Activated CD4-positive, alpha-beta T cell treated with anti-CD3 and anti-CD28 coated beads for 36 hours (primary cell): ENCODE measurements at regions of chr10 and their contacts with region 1.

Region 1: GRCh38 chr10:2978111-2978510 is 89.2 kb upstream of the PFKP start:
- DNase-seq: no peak
- ATAC-seq: no peak
- H3K4me3 Mint-ChIP-seq: no peak overlapping the region
- H3K27ac Mint-ChIP-seq: no peak overlapping the region
- H3K4me1 Mint-ChIP-seq: peaks cover 2% of the 10 kb centered on the region
- H3K27me3 Mint-ChIP-seq: peaks cover 5% of the 10 kb centered on the region

Region 2: GRCh38 chr10:2244471-2244870 is 733.6 kb before region 1 on chr10:
- CTCF ChIA-PET with region 1: no interaction called
- POLR2A ChIA-PET with region 1: no interaction called
- intact Hi-C with region 1: no loop called
- DNase-seq: no peak
- ATAC-seq: no peak
- H3K4me3 Mint-ChIP-seq: no peak overlapping the region
- H3K27ac Mint-ChIP-seq: no peak overlapping the region
- H3K4me1 Mint-ChIP-seq: no peaks in the 10 kb centered on the region
- H3K27me3 Mint-ChIP-seq: no peaks in the 10 kb centered on the region

Region 3: GRCh38 chr10:2839081-2839725 is 138.9 kb before region 1 on chr10:
- CTCF ChIA-PET with region 1: no interaction called
- POLR2A ChIA-PET with region 1: no interaction called
- intact Hi-C with region 1: loop called in 1 of 2 experiments (anchors 1 kb)
- DNase-seq: peak; percentile 66
- ATAC-seq: no peak
- H3K4me3 Mint-ChIP-seq: no peak overlapping the region
- H3K27ac Mint-ChIP-seq: no peak overlapping the region
- H3K4me1 Mint-ChIP-seq: no peaks in the 10 kb centered on the region
- H3K27me3 Mint-ChIP-seq: peaks cover 14% of the 10 kb centered on the region

Region 4: DNA sequence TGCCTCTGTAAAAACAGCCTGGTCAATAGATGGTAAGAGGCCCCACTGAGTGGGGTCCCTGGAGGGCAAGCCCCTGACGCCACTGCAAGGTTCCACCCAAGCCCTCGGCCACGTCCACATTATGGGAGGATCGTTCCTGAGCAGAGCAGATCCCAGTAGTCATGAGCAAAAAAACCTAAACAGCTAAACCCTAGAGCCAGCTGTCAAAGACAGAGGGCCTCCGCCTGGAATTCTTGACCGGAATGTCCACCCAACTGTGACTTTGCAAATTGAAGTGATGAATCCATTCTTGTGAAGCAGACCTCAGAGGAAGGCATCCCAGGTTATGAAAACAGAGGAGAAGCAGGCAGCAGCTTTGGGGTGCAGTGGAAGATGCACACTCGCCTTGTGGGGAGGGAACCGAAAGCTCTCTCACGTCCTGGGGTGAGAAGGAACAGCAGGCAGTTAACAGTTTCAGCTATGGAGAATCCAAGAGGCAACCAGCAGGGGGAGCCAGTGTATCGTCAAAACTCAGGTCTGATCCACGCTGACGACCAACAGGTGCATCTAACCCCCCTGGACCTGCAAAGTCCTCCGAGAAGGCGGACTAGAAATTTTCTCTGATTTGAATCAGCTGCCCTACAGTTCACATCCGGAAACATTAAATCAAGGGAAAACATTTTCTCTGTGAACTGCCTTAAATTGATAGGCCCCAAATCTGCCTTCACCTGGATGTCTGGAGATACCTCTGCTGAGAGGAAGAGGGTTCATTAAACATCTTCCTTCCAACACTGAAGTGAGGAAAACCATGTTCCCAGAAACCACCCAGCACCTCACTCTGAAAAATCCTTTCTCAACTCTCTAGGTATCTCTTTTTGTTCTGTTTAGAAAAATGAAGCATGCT is 49.9 kb before region 1 on chr10:
- CTCF ChIA-PET with region 1: interaction called, 12 read pairs
- POLR2A ChIA-PET with region 1: no interaction called
- intact Hi-C with region 1: loop called (anchors 1 kb)
- DNase-seq: peak; percentile 88
- ATAC-seq: peak; percentile 81
- H3K4me3 Mint-ChIP-seq: no peak overlapping the region
- H3K27ac Mint-ChIP-seq: no peak overlapping the region
- H3K4me1 Mint-ChIP-seq: peaks cover 5% of the 10 kb centered on the region
- H3K27me3 Mint-ChIP-seq: peaks cover 24% of the 10 kb centered on the region

Region 5: GRCh38 chr10:2938869-2939268 is 39.2 kb before region 1 on chr10:
- CTCF ChIA-PET with region 1: interaction called, 4 read pairs
- POLR2A ChIA-PET with region 1: no interaction called
- intact Hi-C with region 1: loop called in 1 of 2 experiments (anchors 2 kb)
- DNase-seq: no peak
- ATAC-seq: no peak
- H3K4me3 Mint-ChIP-seq: no peak overlapping the region
- H3K27ac Mint-ChIP-seq: no peak overlapping the region
- H3K4me1 Mint-ChIP-seq: no peaks in the 10 kb centered on the region
- H3K27me3 Mint-ChIP-seq: peaks cover 37% of the 10 kb centered on the region

Region 6: DNA sequence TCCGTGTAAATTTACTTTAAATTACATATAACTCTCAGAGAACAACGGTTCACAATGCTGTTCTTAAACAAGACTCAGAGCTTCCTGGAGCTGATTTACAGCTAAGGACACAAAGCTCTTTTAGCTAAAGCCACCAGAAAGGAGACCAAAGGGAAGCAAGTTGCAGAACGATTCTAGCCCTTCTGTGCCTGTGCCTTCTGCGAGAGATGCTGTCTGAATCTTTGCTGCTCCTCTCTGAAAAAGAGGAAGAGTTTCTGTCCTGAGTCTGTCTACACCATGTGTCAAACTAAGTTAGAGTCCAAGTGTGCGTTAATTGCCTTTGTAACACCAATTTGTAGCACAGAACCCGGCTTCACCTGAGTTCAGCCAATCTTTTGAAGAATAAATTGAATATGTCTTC is 47.2 kb after region 1 on chr10:
- CTCF ChIA-PET with region 1: no interaction called
- POLR2A ChIA-PET with region 1: no interaction called
- intact Hi-C with region 1: no loop called
- DNase-seq: no peak
- ATAC-seq: no peak
- H3K4me3 Mint-ChIP-seq: no peak overlapping the region
- H3K27ac Mint-ChIP-seq: no peak overlapping the region
- H3K4me1 Mint-ChIP-seq: peaks cover 3% of the 10 kb centered on the region
- H3K27me3 Mint-ChIP-seq: peaks cover 35% of the 10 kb centered on the region